Panc1 (cell line): ENCODE measurements at regions of chr15 and their contacts with region 1.

Region 1: DNA sequence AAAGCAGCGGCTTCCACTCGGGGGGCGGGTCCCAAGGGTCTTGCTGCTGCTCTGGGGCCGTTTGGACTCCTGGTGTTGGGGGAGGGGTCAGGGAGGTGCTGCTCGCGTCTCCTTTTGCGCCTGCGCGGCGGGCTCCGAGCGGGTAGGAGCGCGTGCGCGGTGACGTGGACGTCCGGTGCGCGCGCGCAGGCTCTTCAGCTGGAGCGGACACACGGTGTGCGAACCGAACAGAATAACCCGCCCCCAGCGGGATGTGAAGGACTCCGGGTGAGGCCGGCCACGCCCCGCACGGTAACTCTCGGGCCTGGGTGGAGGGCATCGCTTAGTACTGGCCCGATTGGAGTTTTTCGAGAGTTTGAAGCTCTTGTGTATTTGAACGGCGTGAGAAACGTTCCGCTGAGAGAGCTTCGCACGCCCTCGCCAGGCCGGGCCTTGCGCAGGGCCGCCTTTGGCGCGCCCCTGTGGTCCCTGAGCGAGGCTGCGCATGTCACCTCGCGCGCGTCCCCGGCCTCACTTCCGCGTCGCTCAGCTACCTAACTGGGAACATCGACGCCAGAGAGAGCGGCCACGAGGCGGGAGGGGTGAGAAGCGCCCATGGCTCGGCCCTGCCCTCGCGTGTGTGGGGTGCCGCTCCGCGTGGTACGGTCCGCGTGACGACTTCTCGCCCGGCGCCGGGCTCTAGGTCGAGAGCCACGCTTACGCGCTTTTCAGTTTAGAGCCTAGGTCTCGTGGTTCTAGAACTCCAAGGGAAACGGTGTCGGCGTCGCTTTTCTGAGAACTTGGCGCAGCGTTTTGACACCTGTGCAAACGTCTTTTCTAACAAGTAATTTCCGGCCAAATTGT is at the start of gene MGA:
- DNase-seq: no peak
- ATAC-seq: no peak
- H3K4me3 ChIP-seq: peak within 1 kb of the TSS; percentile 45 to 71
- H3K27ac ChIP-seq: peak within 1 kb of the TSS; percentile 99
- H3K4me1 ChIP-seq: peaks cover 62% of the 10 kb centered on the region
- H3K27me3 ChIP-seq: no peaks in the 10 kb centered on the region
- CTCF ChIP-seq: no peak
- total RNA-seq, gene MGA: 43.6 TPM

Region 2: GRCh38 chr15:40807028-40807887 is 853.2 kb before region 1 on chr15 and contains the starts of genes DNAJC17 and ZFYVE19:
- CTCF ChIA-PET with region 1: no interaction called
- POLR2A ChIA-PET with region 1: interaction called, 10 read pairs
- in situ Hi-C with region 1: no loop called
- intact Hi-C with region 1: no loop called
- DNase-seq: peak; percentile 90
- ATAC-seq: peak; percentile 99
- H3K4me3 ChIP-seq: peak within 1 kb of the TSS; percentile 86 to 90
- H3K27ac ChIP-seq: peak within 1 kb of the TSS; percentile 94
- H3K4me1 ChIP-seq: peaks cover 10% of the 10 kb centered on the region
- H3K27me3 ChIP-seq: no peaks in the 10 kb centered on the region
- CTCF ChIP-seq: no peak
- total RNA-seq, gene DNAJC17: 39.3 TPM
- total RNA-seq, gene ZFYVE19: 39.5 TPM

Region 3: GRCh38 chr15:41207687-41208448 is 452.6 kb before region 1 on chr15:
- CTCF ChIA-PET with region 1: interaction called, 11 read pairs
- POLR2A ChIA-PET with region 1: no interaction called
- in situ Hi-C with region 1: no loop called
- intact Hi-C with region 1: no loop called
- DNase-seq: no peak
- ATAC-seq: no peak
- H3K4me3 ChIP-seq: no peak overlapping the region
- H3K27ac ChIP-seq: no peak overlapping the region
- H3K4me1 ChIP-seq: no peaks in the 10 kb centered on the region
- H3K27me3 ChIP-seq: no peaks in the 10 kb centered on the region
- CTCF ChIP-seq: no peak

Region 4: DNA sequence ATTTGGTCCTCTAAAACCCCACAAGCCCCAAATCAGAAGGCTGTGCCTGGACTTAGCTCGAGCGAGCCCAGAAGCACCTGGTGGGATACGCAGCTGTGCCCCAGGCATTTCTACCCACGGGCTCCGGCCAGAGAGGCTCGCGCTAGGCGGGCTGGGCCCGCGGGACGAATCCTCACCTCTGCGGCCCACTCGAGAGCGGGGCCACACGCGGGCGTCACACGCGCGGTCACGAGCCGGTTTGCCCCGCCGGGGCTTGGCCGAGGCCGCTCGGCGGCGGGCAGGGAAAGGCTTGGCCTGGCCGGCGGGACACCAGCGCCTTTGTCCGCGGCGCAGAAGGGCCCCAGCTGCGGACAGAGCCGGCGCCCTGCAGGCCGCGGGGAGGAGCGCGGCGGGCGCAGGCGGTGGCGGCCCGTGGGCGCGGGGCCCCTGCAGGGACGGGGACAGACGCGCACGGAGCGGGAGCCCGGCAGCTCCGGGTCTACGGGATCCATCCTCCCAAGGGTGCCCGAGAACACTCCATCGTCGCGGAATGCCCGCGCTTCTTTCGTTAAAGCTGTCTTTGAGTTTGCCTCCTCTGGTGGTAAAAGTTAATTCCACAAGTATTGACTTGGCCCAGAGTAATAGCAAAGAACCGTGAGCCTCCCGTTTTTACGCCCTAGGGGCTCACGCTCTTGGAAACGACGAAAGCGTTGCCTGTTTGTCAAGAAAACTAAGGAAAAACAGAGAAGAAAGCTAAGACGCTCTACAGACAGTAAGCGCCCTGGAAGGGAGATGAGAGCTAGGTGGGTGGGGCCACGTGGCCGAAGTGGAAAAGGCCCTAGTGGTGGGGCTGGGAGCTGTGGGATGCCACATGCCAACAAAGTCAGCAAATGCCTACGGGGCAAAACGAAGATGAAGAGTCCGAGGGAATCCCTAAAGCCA is 75.1 kb before region 1 on chr15:
- CTCF ChIA-PET with region 1: no interaction called
- POLR2A ChIA-PET with region 1: no interaction called
- in situ Hi-C with region 1: loop called (anchors 10 kb)
- intact Hi-C with region 1: no loop called
- DNase-seq: peak; percentile 20
- ATAC-seq: peak; percentile 91
- H3K4me3 ChIP-seq: peak overlapping the region; percentile 43 to 76
- H3K27ac ChIP-seq: peak overlapping the region; percentile 88
- H3K4me1 ChIP-seq: no peaks in the 10 kb centered on the region
- H3K27me3 ChIP-seq: no peaks in the 10 kb centered on the region
- CTCF ChIP-seq: peak; percentile 68

Region 5: GRCh38 chr15:41790756-41791546 is 130.5 kb after region 1 on chr15:
- CTCF ChIA-PET with region 1: no interaction called
- POLR2A ChIA-PET with region 1: interaction called, 16 read pairs
- in situ Hi-C with region 1: no loop called
- intact Hi-C with region 1: no loop called
- DNase-seq: no peak
- ATAC-seq: peak; percentile 62
- H3K4me3 ChIP-seq: no peak overlapping the region
- H3K27ac ChIP-seq: peak overlapping the region; percentile 36; the same call in 1 of the 2 replicates
- H3K4me1 ChIP-seq: peaks cover 22% of the 10 kb centered on the region
- H3K27me3 ChIP-seq: no peaks in the 10 kb centered on the region
- CTCF ChIP-seq: no peak

Region 6: DNA sequence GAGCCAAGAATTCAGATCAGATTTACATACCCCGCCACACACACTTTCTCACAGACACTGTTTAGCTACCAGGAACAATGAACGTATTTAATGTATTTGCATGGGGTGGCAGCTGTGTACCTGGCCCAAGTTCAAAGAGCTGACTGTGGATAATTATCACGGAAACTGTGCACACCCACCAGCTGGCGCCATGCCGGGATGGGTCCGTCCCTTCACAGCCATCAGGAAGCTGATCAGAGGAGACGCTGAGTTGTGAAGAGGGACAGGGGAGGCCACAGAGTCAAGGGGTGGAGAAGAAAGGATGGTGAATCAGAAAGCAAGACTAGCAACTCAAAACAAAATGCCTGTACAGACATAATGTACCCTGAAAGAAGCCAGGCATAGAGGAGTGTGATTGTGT is 447.0 kb after region 1 on chr15:
- CTCF ChIA-PET with region 1: no interaction called
- POLR2A ChIA-PET with region 1: no interaction called
- in situ Hi-C with region 1: no loop called
- intact Hi-C with region 1: no loop called
- DNase-seq: no peak
- ATAC-seq: no peak
- H3K4me3 ChIP-seq: no peak overlapping the region
- H3K27ac ChIP-seq: no peak overlapping the region
- H3K4me1 ChIP-seq: no peaks in the 10 kb centered on the region
- H3K27me3 ChIP-seq: peaks cover 9% of the 10 kb centered on the region; the same call in 1 of the 2 replicates
- CTCF ChIP-seq: no peak